ENCODE measurements at regions of chr14 and their contacts with region 1.

Region 1: DNA sequence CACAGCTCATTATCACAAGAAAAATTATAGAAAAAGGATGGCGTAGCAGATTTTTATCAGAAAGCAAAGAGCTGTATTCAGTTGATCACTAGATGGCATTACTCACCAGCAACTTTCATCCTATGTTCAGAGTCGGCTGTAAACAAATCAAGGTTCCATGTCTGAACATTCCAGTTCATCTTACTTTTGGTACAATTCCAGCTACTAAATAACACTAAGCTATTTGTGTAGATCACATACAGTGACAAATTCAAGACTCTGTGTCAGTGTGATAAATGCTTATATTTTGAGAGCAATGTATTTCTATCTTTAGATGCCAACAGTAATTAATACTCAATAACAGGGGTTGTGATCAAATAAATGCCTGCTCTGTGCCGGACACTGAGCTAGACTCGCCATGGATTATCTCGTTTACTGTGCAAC is 30.1 kb downstream of the NRDE2 start:
- DNase-seq: peak in 2 of 9 experiments; percentile 19 to 36
- ATAC-seq: no peak
- H3K4me3 ChIP-seq: no peak overlapping the region
- H3K4me3 Mint-ChIP-seq: no peak overlapping the region
- H3K27ac ChIP-seq: no peak overlapping the region
- H3K27ac Mint-ChIP-seq: no peak overlapping the region
- H3K4me1 ChIP-seq: peaks cover 4% of the 10 kb centered on the region
- H3K4me1 Mint-ChIP-seq: peaks cover 17% of the 10 kb centered on the region
- H3K27me3 ChIP-seq: no peaks in the 10 kb centered on the region
- H3K27me3 Mint-ChIP-seq: no peaks in the 10 kb centered on the region
- CTCF ChIP-seq: no peak

Region 2: DNA sequence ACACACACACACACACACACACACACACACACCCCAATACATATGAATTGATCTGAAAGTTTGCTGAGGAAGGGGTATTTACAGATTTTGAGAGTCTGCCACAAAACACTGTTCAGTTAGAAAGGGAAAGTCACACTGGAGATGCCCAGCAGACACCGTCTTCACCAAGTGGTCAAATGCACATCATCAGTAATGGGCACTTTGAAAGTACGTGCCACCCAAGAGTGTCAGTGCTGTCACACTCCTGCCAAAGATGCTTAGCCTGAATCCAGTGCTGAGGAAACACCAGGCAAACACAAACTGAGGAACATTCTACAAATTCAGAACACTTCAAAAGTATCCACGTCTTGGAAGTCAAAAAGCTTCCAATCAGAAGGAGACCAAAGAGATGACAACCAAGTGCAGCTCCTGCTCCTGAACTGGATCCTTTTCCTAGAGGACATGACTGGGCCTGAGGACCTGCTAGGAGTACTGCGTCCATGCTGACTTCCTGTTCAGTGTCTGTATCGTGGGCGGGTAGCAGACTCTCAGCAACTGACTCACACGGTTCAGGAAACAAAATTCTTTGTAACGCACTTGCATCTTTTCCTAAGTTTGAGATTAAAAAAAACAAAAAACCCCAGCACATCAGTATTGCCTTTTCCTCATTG is 26.7 kb before region 1 on chr14:
- CTCF ChIA-PET with region 1: no interaction called
- POLR2A ChIA-PET with region 1: no interaction called
- intact Hi-C with region 1: no loop called
- DNase-seq: no peak
- ATAC-seq: no peak
- H3K4me3 ChIP-seq: no peak overlapping the region
- H3K4me3 Mint-ChIP-seq: no peak overlapping the region
- H3K27ac ChIP-seq: no peak overlapping the region
- H3K27ac Mint-ChIP-seq: peak overlapping the region; percentile 52
- H3K4me1 ChIP-seq: no peaks in the 10 kb centered on the region
- H3K4me1 Mint-ChIP-seq: peaks cover 7% of the 10 kb centered on the region
- H3K27me3 ChIP-seq: no peaks in the 10 kb centered on the region
- H3K27me3 Mint-ChIP-seq: no peaks in the 10 kb centered on the region
- CTCF ChIP-seq: no peak

Region 3: GRCh38 chr14:90518941-90519256 is 217.2 kb after region 1 on chr14:
- CTCF ChIA-PET with region 1: interaction called, 3 read pairs
- POLR2A ChIA-PET with region 1: no interaction called
- intact Hi-C with region 1: loop called (anchors 2 to 10 kb)
- DNase-seq: peak in 8 of 9 experiments; percentile 29 to 69 (median 58)
- ATAC-seq: peak; percentile 62
- H3K4me3 ChIP-seq: no peak overlapping the region
- H3K4me3 Mint-ChIP-seq: no peak overlapping the region
- H3K27ac ChIP-seq: no peak overlapping the region
- H3K27ac Mint-ChIP-seq: no peak overlapping the region
- H3K4me1 ChIP-seq: no peaks in the 10 kb centered on the region
- H3K4me1 Mint-ChIP-seq: no peaks in the 10 kb centered on the region
- H3K27me3 ChIP-seq: no peaks in the 10 kb centered on the region
- H3K27me3 Mint-ChIP-seq: peaks cover 2% of the 10 kb centered on the region
- CTCF ChIP-seq: peak; percentile 51

Measured in CD8-positive, alpha-beta T cell (primary cell).